WTC11 (cell line): ENCODE measurements at regions of chr14 and their contacts with region 1.

Region 1: DNA sequence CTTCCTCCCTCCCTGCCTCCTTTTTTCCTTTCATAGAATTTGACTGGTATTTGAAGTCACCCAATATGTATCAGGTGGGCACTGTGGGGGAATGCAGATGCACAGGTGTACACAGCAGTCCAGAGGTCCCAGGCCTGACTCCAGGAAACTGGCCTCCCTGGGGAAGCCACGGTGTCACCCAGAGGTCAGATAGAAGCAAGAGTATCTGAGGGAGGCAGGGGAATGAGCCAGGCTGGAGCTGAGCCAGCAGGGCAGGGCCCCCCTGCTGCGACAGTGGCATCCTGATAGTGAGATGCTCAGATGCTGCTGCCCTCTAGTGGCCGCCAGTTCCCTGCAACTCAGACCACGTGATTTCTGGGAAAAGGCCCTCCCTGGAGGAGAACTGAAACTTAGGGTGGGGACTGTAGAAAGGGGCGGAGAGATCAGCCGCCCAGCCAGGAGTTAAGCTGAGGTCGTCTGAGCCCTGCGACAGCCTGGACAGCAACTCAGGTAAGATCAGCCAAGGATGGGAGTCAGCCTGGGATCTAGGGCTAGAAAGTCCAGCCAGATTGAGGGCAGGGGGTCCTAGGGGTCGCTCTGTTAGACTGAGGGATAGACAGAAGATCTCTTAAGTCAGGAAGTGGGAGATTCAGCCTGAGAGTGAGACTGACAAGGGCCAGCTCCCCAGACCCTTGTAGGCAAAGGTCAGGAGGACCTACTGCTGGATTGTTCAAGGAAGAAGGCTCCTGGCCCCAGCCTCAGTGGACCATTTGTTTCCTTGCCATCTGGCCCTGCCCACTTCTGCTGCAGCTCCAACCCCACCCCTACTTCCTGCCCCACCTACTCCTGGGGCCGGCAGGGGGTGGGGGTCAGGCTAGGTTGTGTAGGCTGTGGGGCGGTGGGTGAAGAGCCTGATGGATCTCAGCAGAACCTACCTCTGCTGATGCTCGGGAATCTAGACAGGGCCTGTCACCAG is at the start of gene IRF9:
- DNase-seq: peak; percentile 99
- ATAC-seq: peak; percentile 97
- H3K4me3 Mint-ChIP-seq: peak within 1 kb of the TSS; percentile 70
- H3K27ac Mint-ChIP-seq: peak within 1 kb of the TSS; percentile 90
- H3K4me1 Mint-ChIP-seq: peaks cover 13% of the 10 kb centered on the region
- H3K27me3 Mint-ChIP-seq: no peaks in the 10 kb centered on the region
- CTCF ChIP-seq: peak; percentile 91
- total RNA-seq, gene IRF9: 15.6 to 16.2 TPM (median 15.7 TPM) in 3 replicates

Region 2: GRCh38 chr14:24058260-24058950 is 102.7 kb before region 1 on chr14:
- CTCF ChIA-PET with region 1: interaction called, 24 read pairs
- POLR2A ChIA-PET with region 1: no interaction called
- DNase-seq: peak; percentile 88
- ATAC-seq: peak; percentile 87
- H3K4me3 Mint-ChIP-seq: no peak overlapping the region
- H3K27ac Mint-ChIP-seq: no peak overlapping the region; the same call in 1 of the 2 replicates
- H3K4me1 Mint-ChIP-seq: peaks cover 6% of the 10 kb centered on the region
- H3K27me3 Mint-ChIP-seq: no peaks in the 10 kb centered on the region
- CTCF ChIP-seq: peak; percentile 73

Region 3: DNA sequence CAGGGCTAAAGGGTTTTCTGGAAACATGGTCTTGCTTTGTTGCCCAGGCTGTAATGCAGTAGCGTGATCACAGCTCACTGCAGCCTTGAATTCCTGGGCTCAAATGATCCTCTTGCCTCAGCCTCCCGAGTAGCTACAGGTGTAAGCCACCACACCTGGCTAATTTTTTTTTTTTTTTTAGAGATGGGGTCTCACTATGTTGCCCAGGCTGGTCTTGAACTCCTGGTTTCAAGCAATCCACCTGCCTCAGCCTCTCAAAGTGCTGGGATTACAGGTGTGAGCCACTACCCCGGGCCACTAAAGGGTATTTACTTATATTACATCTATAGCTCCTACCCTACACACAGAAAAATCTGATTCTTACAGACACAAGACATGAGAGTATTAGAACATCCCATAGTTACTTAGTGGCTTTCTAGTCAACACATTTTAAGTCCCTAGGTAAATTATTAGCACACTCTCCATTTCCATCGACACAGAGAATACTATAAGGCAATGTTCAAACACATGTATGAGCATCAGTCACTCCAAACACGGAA is 52.7 kb before region 1 on chr14:
- CTCF ChIA-PET with region 1: interaction called, 42 read pairs
- POLR2A ChIA-PET with region 1: no interaction called
- DNase-seq: no peak
- ATAC-seq: no peak; the same call in 1 of the 2 replicates
- H3K4me3 Mint-ChIP-seq: no peak overlapping the region
- H3K27ac Mint-ChIP-seq: no peak overlapping the region
- H3K4me1 Mint-ChIP-seq: peaks cover 5% of the 10 kb centered on the region
- H3K27me3 Mint-ChIP-seq: no peaks in the 10 kb centered on the region; the same call in 1 of the 2 replicates
- CTCF ChIP-seq: no peak

Region 4: GRCh38 chr14:24141097-24141880 is 19.8 kb before region 1 on chr14 and contains the start of gene EMC9:
- CTCF ChIA-PET with region 1: interaction called, 55 read pairs
- POLR2A ChIA-PET with region 1: interaction called, 10 read pairs
- DNase-seq: peak; percentile 100
- ATAC-seq: peak; percentile 89
- H3K4me3 Mint-ChIP-seq: peak within 1 kb of the TSS; percentile 95
- H3K27ac Mint-ChIP-seq: peak within 1 kb of the TSS; percentile 99
- H3K4me1 Mint-ChIP-seq: peaks cover 35% of the 10 kb centered on the region
- H3K27me3 Mint-ChIP-seq: no peaks in the 10 kb centered on the region
- CTCF ChIP-seq: no peak
- total RNA-seq, gene EMC9: 41.3 to 47.9 TPM (median 44.4 TPM) in 3 replicates

Region 5: GRCh38 chr14:24188251-24189058 is 27.3 kb after region 1 on chr14 and contains the start of gene IPO4:
- CTCF ChIA-PET with region 1: interaction called, 24 read pairs
- POLR2A ChIA-PET with region 1: interaction called, 7 read pairs
- DNase-seq: peak; percentile 97
- ATAC-seq: peak; percentile 88
- H3K4me3 Mint-ChIP-seq: peak within 1 kb of the TSS; percentile 89
- H3K27ac Mint-ChIP-seq: peak within 1 kb of the TSS; percentile 76; the same call in 1 of the 2 replicates
- H3K4me1 Mint-ChIP-seq: peaks cover 16% of the 10 kb centered on the region
- H3K27me3 Mint-ChIP-seq: no peaks in the 10 kb centered on the region
- CTCF ChIP-seq: no peak
- total RNA-seq, gene IPO4: 87.6 to 128 TPM (median 91.2 TPM) in 3 replicates

Region 6: DNA sequence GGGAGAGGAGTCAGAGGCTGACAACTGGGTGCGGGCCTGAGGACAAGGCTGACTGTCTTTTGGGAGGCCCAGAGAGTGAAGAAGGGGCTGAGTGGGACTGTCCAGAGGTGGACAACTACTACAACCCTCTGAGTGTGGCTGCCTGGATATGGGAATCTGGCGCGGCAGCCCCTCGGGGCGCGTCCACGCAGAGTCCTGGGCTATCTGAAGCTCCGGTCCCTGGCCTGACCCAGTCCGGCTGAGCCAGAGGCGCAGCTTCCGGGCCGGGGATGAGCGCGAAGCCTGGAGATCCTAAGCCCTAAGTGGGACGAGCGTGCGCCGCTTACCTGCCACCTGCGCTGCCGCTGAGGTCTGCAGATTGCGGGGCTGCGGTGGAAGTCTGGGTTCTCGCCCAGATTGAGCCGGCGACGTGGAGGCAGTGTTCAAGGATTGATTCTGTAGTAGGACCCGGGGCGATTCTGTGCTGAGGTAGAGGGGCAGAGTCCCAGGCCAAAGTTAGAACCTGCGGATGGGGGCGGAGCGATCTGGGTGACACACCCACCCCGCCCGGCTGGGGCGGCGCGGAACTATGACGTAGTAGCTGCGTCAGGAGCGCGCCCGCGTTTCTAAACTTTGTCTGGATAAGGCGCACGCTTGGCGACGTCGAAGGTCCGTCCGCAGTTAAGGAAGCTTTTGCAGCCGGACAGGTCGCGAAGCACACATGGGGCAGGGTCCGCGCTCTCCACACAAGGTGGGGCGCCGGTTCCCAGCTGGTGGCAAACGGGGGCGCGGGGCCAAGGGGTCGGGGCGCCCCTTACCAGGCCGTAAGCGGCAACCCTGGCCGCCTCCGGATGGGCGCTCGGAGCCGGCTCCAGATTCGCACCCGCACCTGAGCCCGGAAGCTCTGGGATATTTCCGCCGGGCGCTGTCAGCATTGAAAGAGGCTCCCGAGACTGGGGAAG is 138.4 kb after region 1 on chr14 and contains the starts of genes DHRS1 and NOP9:
- CTCF ChIA-PET with region 1: interaction called, 12 read pairs
- POLR2A ChIA-PET with region 1: no interaction called
- DNase-seq: peak; percentile 94
- ATAC-seq: peak; percentile 83
- H3K4me3 Mint-ChIP-seq: peak within 1 kb of the TSS; percentile 91
- H3K27ac Mint-ChIP-seq: peak within 1 kb of the TSS; percentile 89
- H3K4me1 Mint-ChIP-seq: peaks cover 19% of the 10 kb centered on the region
- H3K27me3 Mint-ChIP-seq: 0 out of 2 replicates have a peak, but pooled peaks cover 3% of the 10 kb centered on the region
- CTCF ChIP-seq: no peak
- total RNA-seq, gene DHRS1: 13.9 to 16.7 TPM (median 15.4 TPM) in 3 replicates
- total RNA-seq, gene NOP9: 34.3 to 44.4 TPM (median 35.0 TPM) in 3 replicates